Uterus (tissue), 4 donors: ENCODE measurements at regions of chr5 and their contacts with region 1.

Region 1: DNA sequence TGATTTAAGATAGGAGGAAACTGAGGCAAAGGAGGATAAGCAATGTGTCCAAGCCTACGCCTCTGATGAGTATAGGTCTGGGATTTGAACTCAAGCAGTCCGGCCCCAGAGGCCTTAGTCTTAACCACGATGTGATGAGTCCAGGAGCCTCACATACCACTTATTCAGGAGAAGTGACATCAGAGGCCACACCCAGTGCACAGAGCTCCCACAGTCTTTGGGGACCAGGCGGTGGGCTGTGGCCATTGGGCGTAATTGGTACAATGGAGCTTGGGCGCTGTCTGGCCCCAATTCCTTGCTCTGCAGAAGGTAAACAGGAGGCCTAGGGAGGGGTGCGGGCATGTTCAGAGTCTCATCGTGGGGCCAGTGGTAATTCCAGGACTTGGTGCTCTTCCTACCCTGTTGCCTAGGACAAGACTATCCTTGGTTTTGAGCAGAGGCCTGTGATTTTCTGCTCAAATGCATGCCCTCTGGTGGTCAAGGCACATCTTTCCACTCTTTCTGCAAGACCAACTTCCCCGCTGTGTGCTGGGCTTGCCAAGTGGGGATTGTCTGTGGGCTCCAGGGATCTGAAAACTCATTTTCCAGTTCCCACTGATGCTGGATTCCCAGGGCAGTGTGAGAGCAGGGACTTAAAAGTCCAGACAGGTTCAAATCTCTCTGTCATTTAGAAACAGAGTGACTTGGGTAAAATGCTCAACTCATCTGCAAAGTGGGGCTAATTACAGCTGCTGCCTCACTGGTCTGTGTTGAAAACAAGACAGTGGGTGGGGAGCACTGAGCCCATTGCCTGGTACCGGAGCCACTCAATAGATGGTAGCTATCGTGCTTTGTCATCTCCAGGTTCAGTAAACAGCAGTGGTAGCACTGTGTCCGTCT is 15.8 kb downstream of the NDST1 start:
- DNase-seq: peak; percentile 37 to 58
- H3K4me3 ChIP-seq: no peak overlapping the region
- H3K27ac ChIP-seq: no peak overlapping the region
- H3K4me1 ChIP-seq: no peaks in the 10 kb centered on the region
- H3K27me3 ChIP-seq: no peaks in the 10 kb centered on the region
- CTCF ChIP-seq: peak; percentile 38 to 68 (median 58)
- POLR2A ChIP-seq: no peak

Region 2: GRCh38 chr5:150302301-150303069 is 221.2 kb before region 1 on chr5 and contains the start of gene ARSI:
- intact Hi-C with region 1: no loop called
- DNase-seq: peak; percentile 74 to 86
- H3K4me3 ChIP-seq: peak within 1 kb of the TSS; percentile 25 to 41
- H3K27ac ChIP-seq: peak within 1 kb of the TSS; percentile 85 to 95
- H3K4me1 ChIP-seq: peaks cover 10 to 16% of the 10 kb centered on the region in 2 donors
- H3K27me3 ChIP-seq: no peaks in the 10 kb centered on the region
- CTCF ChIP-seq: peak in 2 of 4 experiments; percentile 27 to 41
- POLR2A ChIP-seq: no peak
- total RNA-seq, gene ARSI: 4.3 to 15.1 (median 5.7) TPM

Region 3: DNA sequence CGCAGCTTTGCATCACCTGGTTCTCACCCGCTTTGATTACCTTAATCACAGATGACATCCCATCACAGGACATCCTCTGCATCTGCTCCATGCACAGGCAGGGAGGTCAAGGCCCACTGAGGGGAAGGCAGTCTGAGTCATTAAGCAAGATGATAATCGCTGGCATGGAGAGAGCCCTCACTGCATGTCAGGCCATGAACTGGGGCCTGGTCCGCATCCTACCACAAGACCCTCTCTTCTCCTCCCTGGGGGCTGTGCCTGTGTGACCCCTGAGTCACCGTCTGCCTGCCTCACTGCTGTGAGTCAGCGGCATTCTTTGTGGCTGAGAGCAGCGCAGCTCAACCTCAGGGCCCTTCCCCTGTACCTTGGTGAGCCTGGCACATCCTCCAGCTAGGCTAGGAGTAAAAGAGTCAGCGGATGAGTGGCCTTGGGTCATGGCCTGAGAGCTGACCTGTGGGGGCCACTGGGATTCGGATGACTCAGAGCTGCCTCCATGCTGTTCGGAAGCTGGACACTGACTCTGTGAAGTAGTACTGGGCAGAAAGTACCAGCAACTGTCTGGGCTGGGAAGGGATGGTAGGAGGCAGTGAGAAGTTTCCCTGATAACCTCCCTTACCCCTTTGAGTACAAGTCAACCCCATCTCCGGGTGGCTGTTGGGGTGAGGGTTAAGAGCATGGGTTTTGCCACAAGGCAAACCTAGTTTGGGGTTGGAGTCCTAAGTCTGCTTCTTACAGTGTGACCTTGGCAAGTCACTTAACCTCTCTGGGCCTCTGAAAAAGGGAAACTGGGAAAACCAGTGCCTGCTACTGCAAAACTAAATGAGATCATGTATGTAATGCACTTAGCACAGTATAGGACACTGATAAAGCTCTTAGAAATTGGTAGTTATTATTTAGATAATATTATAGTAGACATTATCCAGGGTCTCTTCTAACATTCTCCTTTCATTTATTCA is 206.4 kb before region 1 on chr5:
- intact Hi-C with region 1: no loop called
- DNase-seq: peak in 1 of 2 donors; percentile 76
- H3K4me3 ChIP-seq: no peak overlapping the region
- H3K27ac ChIP-seq: peak overlapping the region; percentile 65 to 74
- H3K4me1 ChIP-seq: peaks cover 0 to 9% of the 10 kb centered on the region in 2 donors
- H3K27me3 ChIP-seq: no peaks in the 10 kb centered on the region
- CTCF ChIP-seq: no peak
- POLR2A ChIP-seq: no peak

Region 4: DNA sequence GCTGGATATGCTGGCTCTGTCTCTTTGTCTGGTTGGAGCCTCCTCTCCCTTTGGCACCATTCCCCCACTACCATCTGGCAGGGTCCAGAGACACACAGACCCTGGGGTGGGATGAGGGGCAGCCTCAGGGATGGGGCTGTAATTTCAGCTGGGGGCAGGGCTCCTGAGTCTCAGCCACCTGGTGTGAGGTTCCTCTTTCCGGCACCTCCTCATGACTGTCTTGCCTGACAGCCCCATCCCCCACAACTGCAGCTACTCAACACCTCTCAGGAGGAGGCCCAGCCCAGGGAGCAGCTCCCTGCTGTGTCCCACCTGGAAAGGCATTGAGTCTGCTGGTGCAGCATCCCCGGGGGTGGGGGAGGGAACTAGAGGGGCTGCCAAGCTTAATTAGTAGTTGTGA is 62.5 kb before region 1 on chr5:
- intact Hi-C with region 1: loop called (anchors 2 kb)
- DNase-seq: no peak
- H3K4me3 ChIP-seq: no peak overlapping the region
- H3K27ac ChIP-seq: no peak overlapping the region
- H3K4me1 ChIP-seq: peaks cover 0 to 7% of the 10 kb centered on the region in 2 donors
- H3K27me3 ChIP-seq: no peaks in the 10 kb centered on the region
- CTCF ChIP-seq: no peak
- POLR2A ChIP-seq: no peak